MCF 10A (cell line): ENCODE measurements at regions of chr3 and their contacts with region 1.

Region 1: GRCh38 chr3:168165390-168166269 is 69.9 kb upstream of the GOLIM4 start:
- DNase-seq: peak; percentile 84
- H3K4me3 Mint-ChIP-seq: no peak overlapping the region
- H3K27ac Mint-ChIP-seq: no peak overlapping the region
- H3K4me1 Mint-ChIP-seq: no peaks in the 10 kb centered on the region
- H3K27me3 Mint-ChIP-seq: no peaks in the 10 kb centered on the region
- CTCF ChIP-seq: peak; percentile 72

Region 2: GRCh38 chr3:167406875-167407492 is 758.6 kb before region 1 on chr3:
- CTCF ChIA-PET with region 1: no interaction called
- POLR2A ChIA-PET with region 1: no interaction called
- intact Hi-C with region 1: loop called (anchors 5 kb)
- DNase-seq: peak; percentile 85
- H3K4me3 Mint-ChIP-seq: no peak overlapping the region
- H3K27ac Mint-ChIP-seq: no peak overlapping the region
- H3K4me1 Mint-ChIP-seq: no peaks in the 10 kb centered on the region
- H3K27me3 Mint-ChIP-seq: peaks cover 28% of the 10 kb centered on the region
- CTCF ChIP-seq: peak; percentile 59

Region 3: DNA sequence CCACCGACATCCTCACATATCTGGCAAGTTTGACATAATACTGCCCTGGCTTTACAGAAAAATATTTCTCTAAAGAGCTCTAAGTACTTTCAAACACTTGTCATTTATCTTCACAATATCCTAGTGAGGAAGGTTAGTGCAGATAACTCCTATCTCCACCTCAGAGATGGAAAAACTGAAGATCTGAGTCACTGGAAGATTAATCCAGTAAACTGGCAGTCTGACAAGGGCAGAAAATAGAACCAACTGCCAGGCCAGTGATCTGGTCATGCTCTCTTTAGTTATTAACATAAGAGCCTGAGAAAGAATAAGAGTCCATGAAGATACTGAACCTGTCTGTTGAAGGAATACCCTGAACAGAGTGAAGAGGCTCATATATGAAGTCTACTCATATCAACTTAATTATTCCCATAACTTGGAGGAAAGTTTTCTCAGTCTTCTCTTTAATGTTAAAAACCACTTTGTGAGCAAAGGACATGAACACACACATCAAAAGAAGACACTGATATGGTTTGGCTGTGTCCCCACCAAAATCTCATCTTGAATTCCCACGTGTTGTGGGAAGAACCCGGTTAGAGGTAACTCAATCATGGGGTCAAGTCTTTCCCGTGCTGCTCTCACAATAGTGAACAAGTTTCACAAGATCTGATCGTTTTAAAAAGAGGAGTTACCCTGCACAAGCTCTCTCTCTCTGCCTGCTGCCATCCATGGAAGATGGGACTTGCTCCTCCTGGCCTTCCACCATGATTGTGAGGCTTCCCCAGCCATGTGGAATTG is 131.3 kb before region 1 on chr3:
- CTCF ChIA-PET with region 1: interaction called, 459 read pairs
- POLR2A ChIA-PET with region 1: no interaction called
- intact Hi-C with region 1: no loop called
- DNase-seq: peak; percentile 40
- H3K4me3 Mint-ChIP-seq: no peak overlapping the region
- H3K27ac Mint-ChIP-seq: no peak overlapping the region
- H3K4me1 Mint-ChIP-seq: no peaks in the 10 kb centered on the region
- H3K27me3 Mint-ChIP-seq: no peaks in the 10 kb centered on the region
- CTCF ChIP-seq: no peak

Region 4: DNA sequence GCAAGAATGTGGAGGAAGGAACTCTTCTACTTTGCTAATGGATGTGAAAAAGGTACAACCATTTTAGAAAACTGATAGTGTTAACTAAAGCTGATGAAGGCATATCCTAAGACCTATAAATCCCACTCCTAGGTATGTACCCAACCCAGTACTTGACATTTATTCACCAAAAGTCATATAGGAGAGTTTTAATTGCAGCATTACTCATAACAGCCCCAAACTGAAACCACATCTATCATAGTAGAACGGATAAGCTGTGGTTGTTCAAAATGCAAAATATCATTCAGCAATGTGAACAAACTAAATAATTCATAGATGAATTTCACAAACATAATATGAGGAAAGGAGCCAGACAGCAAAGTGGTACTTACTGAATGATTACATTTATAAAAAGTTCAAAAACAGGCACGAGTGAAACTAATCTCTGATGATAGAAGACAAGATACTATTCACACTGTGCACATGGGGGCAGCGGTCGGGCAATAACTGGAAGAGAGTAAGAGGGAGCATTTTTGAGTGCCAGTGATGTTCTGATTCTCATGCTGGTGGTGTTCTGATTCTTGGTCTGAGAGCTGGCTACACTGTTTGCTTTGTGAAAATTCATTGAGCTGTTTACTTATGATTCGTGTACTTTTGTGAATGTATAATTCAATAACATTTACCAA is 104.2 kb before region 1 on chr3:
- CTCF ChIA-PET with region 1: interaction called, 459 read pairs
- POLR2A ChIA-PET with region 1: no interaction called
- intact Hi-C with region 1: no loop called
- DNase-seq: no peak
- H3K4me3 Mint-ChIP-seq: no peak overlapping the region
- H3K27ac Mint-ChIP-seq: no peak overlapping the region
- H3K4me1 Mint-ChIP-seq: peaks cover 20% of the 10 kb centered on the region
- H3K27me3 Mint-ChIP-seq: no peaks in the 10 kb centered on the region
- CTCF ChIP-seq: no peak

Region 5: GRCh38 chr3:168095611-168096209 is 69.9 kb before region 1 on chr3 and contains the start of gene GOLIM4:
- CTCF ChIA-PET with region 1: interaction called, 14 read pairs
- POLR2A ChIA-PET with region 1: interaction called, 10 read pairs
- intact Hi-C with region 1: loop called (anchors 1 kb)
- DNase-seq: peak; percentile 98
- H3K4me3 Mint-ChIP-seq: peak within 1 kb of the TSS; percentile 80
- H3K27ac Mint-ChIP-seq: peak within 1 kb of the TSS; percentile 85
- H3K4me1 Mint-ChIP-seq: peaks cover 24% of the 10 kb centered on the region
- H3K27me3 Mint-ChIP-seq: no peaks in the 10 kb centered on the region
- CTCF ChIP-seq: no peak
- total RNA-seq, gene GOLIM4: 21.5 and 25.8 TPM in 2 replicates

Region 6: GRCh38 chr3:168152149-168152548 is 13.5 kb before region 1 on chr3:
- CTCF ChIA-PET with region 1: interaction called, 12 read pairs
- POLR2A ChIA-PET with region 1: no interaction called
- intact Hi-C with region 1: no loop called
- DNase-seq: no peak
- H3K4me3 Mint-ChIP-seq: no peak overlapping the region
- H3K27ac Mint-ChIP-seq: no peak overlapping the region
- H3K4me1 Mint-ChIP-seq: no peaks in the 10 kb centered on the region
- H3K27me3 Mint-ChIP-seq: no peaks in the 10 kb centered on the region
- CTCF ChIP-seq: no peak

Region 7: DNA sequence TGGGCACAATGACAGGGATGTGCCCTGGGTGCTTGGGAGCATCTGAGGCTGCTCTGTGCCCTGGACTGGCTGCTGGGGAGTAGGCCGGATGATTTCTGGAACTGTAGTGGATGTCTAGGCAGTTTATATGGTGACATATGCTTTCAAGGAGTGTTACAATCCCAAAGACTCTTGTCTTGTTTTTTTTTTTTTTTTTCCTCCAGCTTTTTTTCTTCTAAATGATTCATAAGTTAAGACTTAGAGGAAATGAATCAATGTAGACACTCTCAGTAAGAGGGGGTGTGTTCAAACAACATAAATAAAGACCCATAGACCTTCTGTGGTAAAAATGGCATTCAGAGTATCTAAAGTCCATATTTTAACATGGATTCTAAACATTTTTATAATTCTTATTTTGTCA is 636.2 kb after region 1 on chr3:
- CTCF ChIA-PET with region 1: no interaction called
- POLR2A ChIA-PET with region 1: no interaction called
- intact Hi-C with region 1: no loop called
- DNase-seq: no peak
- H3K4me3 Mint-ChIP-seq: no peak overlapping the region
- H3K27ac Mint-ChIP-seq: no peak overlapping the region
- H3K4me1 Mint-ChIP-seq: peaks cover 5% of the 10 kb centered on the region
- H3K27me3 Mint-ChIP-seq: no peaks in the 10 kb centered on the region
- CTCF ChIP-seq: no peak